Psoas muscle (tissue), 8 donors: ENCODE measurements at regions of chr1 and their contacts with region 1.

Region 1: GRCh38 chr1:64242895-64243756 is 39.7 kb downstream of the UBE2U start:
- DNase-seq: no peak
- ATAC-seq: peak in 3 of 4 donors; percentile 52 to 66 (median 66)
- H3K4me3 ChIP-seq: no peak overlapping the region
- H3K27ac ChIP-seq: no peak overlapping the region
- H3K4me1 ChIP-seq: no peaks in the 10 kb centered on the region
- H3K27me3 ChIP-seq: peaks cover 0 to 2% (median 0%) of the 10 kb centered on the region in 3 donors
- CTCF ChIP-seq: peak; percentile 57

Region 2: DNA sequence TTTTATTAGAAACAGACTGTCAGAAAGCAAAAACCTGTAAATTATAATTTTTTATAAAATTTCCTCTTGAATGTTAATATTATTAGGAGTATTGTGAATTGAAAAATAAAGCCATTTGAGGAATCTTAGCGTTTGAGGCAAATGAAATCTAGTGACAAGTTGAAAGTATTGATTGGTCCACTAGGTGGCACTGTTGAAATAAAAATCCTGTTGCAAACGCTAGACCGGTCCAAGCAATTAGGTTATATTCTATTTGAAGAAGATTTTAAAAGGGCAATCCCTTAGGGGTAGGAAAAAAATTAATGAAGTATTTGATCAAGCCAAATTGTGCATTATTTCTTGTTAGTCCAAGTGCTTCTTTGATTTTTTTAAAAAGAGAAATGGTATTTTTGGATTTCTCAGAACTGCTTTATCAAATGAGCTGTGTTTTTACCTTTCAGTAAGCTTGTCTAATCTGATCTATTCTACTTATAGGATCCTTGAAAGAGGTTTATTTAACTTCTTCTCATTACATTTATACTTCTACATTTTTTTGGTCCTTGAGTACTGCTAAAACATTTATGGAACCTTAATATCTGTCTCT is 1401.4 kb before region 1 on chr1:
- intact Hi-C with region 1: loop called in 1 of 2 experiments (anchors 10 kb)
- DNase-seq: no peak
- ATAC-seq: peak; percentile 75 to 92 (median 82)
- H3K4me3 ChIP-seq: no peak overlapping the region
- H3K27ac ChIP-seq: no peak overlapping the region
- H3K4me1 ChIP-seq: no peaks in the 10 kb centered on the region
- H3K27me3 ChIP-seq: no peaks in the 10 kb centered on the region
- CTCF ChIP-seq: peak; percentile 73

Region 3: GRCh38 chr1:63563745-63564144 is 679.4 kb before region 1 on chr1:
- intact Hi-C with region 1: loop called in 1 of 2 experiments (anchors 10 kb)
- DNase-seq: no peak
- ATAC-seq: no peak
- H3K4me3 ChIP-seq: no peak overlapping the region
- H3K27ac ChIP-seq: no peak overlapping the region
- H3K4me1 ChIP-seq: no peaks in the 10 kb centered on the region
- H3K27me3 ChIP-seq: no peaks in the 10 kb centered on the region
- CTCF ChIP-seq: no peak

Region 4: DNA sequence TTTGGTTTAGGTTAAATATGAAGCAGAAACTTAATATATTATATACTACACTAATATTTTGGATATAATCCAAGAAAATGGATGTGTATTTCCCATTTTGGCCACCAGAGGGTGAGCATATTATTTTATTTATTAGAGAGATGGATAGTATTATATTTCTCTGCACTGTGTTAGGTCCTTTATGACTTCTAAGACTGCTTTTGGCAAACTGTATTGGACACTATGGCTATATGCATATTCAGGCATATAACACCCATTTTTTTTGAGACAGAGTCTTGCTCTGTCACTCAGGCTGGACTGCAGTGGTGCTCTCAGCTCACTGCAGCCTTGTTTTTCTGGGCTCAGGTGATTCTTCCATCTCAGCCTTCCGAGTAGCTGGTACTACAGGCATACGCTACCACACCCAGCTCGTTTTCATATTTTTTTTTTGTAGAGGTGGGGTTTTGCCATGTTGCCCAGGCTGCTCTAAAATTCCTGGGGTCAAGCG is 667.7 kb before region 1 on chr1:
- intact Hi-C with region 1: loop called in 1 of 2 experiments (anchors 5 kb)
- DNase-seq: no peak
- ATAC-seq: peak; percentile 46 to 87 (median 78)
- H3K4me3 ChIP-seq: no peak overlapping the region
- H3K27ac ChIP-seq: no peak overlapping the region
- H3K4me1 ChIP-seq: no peaks in the 10 kb centered on the region
- H3K27me3 ChIP-seq: no peaks in the 10 kb centered on the region
- CTCF ChIP-seq: peak; percentile 85

Region 5: GRCh38 chr1:63615768-63616420 is 627.2 kb before region 1 on chr1:
- intact Hi-C with region 1: loop called (anchors 2 to 5 kb)
- DNase-seq: peak; percentile 26 to 54
- ATAC-seq: peak; percentile 61 to 74 (median 68)
- H3K4me3 ChIP-seq: no peak overlapping the region
- H3K27ac ChIP-seq: peak overlapping the region; percentile 81
- H3K4me1 ChIP-seq: peaks cover 77% of the 10 kb centered on the region
- H3K27me3 ChIP-seq: no peaks in the 10 kb centered on the region
- CTCF ChIP-seq: peak; percentile 85

Region 6: DNA sequence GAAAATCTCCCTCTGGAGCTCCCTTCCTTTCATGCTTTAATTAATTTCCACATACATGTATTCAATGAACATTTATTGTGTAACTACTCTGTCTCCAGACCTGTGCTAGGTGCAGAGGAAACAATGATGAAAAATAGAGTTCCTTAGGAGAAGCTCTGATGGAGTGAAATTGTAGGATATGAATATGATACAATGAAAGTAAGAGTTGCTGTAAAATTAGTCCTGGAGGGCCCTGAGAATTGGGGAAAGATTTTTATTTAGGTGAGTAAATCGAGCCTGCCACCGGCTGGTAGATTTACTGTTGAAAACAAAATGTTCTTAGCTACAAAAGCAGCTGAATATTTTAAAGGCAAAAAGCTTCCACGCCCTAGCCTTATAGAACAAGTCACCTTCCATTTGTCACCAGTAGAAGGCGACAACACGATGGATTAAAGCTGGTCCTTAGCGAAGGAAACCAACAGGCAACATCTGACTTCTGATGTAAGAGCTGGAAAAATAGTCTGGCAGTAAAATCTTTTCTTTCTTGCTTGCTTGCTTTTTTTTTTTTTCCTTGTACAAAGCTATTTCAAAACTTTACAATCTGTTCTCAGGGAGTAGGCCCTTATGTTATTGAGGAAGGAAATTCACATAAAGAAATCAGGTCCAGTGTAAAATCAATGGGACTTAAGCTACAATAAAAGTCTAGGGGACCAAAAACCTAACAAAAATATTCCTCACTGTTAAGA is 551.3 kb before region 1 on chr1:
- intact Hi-C with region 1: loop called (anchors 2 to 5 kb)
- DNase-seq: no peak
- ATAC-seq: peak; percentile 83 to 98 (median 88)
- H3K4me3 ChIP-seq: no peak overlapping the region
- H3K27ac ChIP-seq: no peak overlapping the region
- H3K4me1 ChIP-seq: peaks cover 5% of the 10 kb centered on the region
- H3K27me3 ChIP-seq: no peaks in the 10 kb centered on the region
- CTCF ChIP-seq: peak; percentile 79

Region 7: GRCh38 chr1:63773815-63774616 is 469.1 kb before region 1 on chr1 and contains the start of gene ROR1:
- intact Hi-C with region 1: loop called (anchors 10 kb)
- DNase-seq: peak; percentile 88 to 93
- ATAC-seq: peak; percentile 98 to 99 (median 98)
- H3K4me3 ChIP-seq: peak within 1 kb of the TSS; percentile 83
- H3K27ac ChIP-seq: peak within 1 kb of the TSS; percentile 87
- H3K4me1 ChIP-seq: peaks cover 15% of the 10 kb centered on the region
- H3K27me3 ChIP-seq: peaks cover 0 to 7% (median 0%) of the 10 kb centered on the region in 3 donors
- CTCF ChIP-seq: peak; percentile 61
- total RNA-seq, gene ROR1: 1.2 to 2.8 (median 2.0) TPM

Region 8: GRCh38 chr1:64308866-64309265 is 65.7 kb after region 1 on chr1:
- intact Hi-C with region 1: no loop called
- DNase-seq: no peak
- ATAC-seq: no peak
- H3K4me3 ChIP-seq: no peak overlapping the region
- H3K27ac ChIP-seq: no peak overlapping the region
- H3K4me1 ChIP-seq: no peaks in the 10 kb centered on the region
- H3K27me3 ChIP-seq: no peaks in the 10 kb centered on the region
- CTCF ChIP-seq: no peak